A673 (cell line): ENCODE measurements at regions of chr4 and their contacts with region 1.

Region 1: DNA sequence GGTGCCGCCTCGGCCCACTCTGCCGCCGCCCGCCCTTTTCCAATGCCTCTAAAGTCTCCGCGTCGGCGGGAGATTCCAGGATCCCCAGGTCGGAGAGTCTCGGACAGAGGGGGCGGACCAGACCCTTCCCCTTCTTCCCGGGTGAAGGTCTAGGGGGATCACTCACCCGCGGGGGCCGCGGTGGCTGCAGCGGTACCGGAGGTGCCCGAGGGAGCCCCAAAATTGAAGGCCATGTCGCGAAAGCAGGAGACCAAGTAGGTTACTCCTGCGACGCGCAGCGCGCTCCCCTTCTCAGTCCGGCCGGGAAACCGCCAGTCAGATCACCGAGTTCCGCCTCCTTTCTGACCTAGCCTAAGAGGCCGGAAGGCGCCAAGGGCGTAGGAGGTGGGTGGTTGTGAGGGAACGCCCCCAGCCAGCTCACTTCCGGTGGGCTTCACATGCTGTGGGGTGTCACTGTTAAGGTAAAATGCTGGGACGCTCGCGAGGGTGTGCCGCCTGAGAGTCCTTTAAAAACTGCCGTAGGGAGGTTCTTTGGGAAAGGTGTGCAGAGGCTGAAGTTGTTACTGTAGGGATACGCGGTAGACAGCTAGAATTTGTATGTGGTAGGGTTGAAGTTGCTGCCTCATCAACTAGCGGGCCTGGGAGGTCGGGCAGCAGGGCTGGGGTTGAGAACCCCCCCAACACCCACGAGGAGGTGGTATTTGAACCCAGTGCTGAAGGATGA is at the start of gene NUP54:
- DNase-seq: peak; percentile 93
- H3K4me3 ChIP-seq: peak within 1 kb of the TSS; percentile 85
- H3K27ac ChIP-seq: peak within 1 kb of the TSS; percentile 99
- H3K4me1 ChIP-seq: peaks cover 7% of the 10 kb centered on the region
- H3K27me3 ChIP-seq: no peaks in the 10 kb centered on the region
- CTCF ChIP-seq: no peak
- total RNA-seq, gene NUP54: 43.3 and 45.9 TPM in 2 replicates

Region 2: GRCh38 chr4:75989846-75990528 is 158.3 kb before region 1 on chr4:
- CTCF ChIA-PET with region 1: no interaction called
- POLR2A ChIA-PET with region 1: no interaction called
- intact Hi-C with region 1: loop called (anchors 5 kb)
- DNase-seq: no peak
- H3K4me3 ChIP-seq: peak overlapping the region; percentile 83
- H3K27ac ChIP-seq: peak overlapping the region; percentile 75
- H3K4me1 ChIP-seq: no peaks in the 10 kb centered on the region
- H3K27me3 ChIP-seq: no peaks in the 10 kb centered on the region
- CTCF ChIP-seq: no peak